Activated CD4-positive, alpha-beta T cell treated with anti-CD3 and anti-CD28 coated beads, Interleukin-2, amount 10 ng/mL, durations not matched to agents 24 days and 14 days (primary cell): ENCODE measurements at regions of chr17 and their contacts with region 1.

Region 1: DNA sequence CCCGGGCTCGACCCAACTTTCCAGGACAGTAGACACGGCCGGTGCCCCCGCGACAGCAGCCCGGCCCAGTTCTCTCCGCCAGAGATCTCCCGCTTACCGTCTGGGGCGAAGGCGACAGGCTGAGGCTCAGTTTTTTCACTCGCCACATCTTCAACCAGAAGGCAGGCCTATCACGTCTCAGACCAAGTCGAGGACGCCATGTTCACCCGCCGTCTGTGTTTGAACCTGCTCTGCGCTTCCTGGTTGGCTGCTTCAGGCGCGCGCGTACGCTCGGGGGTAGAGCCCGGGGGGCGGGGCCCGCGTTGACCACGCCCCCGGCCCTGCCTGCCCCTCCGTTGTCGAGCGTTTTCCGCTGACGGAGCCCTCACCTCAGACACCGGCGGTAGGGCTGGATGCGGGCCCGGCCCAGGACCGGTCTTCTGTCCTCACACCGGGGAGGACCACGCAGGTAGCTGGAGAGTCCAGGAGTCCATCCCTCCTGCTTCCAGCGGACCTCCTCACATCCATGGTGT is at the start of gene SPAG5:
- DNase-seq: peak; percentile 99
- H3K4me3 Mint-ChIP-seq: peak within 1 kb of the TSS; percentile 91
- H3K27ac Mint-ChIP-seq: peak within 1 kb of the TSS; percentile 98
- H3K4me1 Mint-ChIP-seq: peaks cover 22% of the 10 kb centered on the region
- H3K27me3 Mint-ChIP-seq: no peaks in the 10 kb centered on the region
- total RNA-seq, gene SPAG5: 89.6 and 91.3 TPM in 2 replicates

Region 2: GRCh38 chr17:28405632-28406472 is 193.0 kb before region 1 on chr17 and contains the start of gene SLC46A1:
- intact Hi-C with region 1: no loop called
- DNase-seq: peak; percentile 81
- H3K4me3 Mint-ChIP-seq: peak within 1 kb of the TSS; percentile 80
- H3K27ac Mint-ChIP-seq: peak within 1 kb of the TSS; percentile 39
- H3K4me1 Mint-ChIP-seq: peaks cover 7% of the 10 kb centered on the region
- H3K27me3 Mint-ChIP-seq: peaks cover 7% of the 10 kb centered on the region
- total RNA-seq, gene SLC46A1: 7.0 and 7.9 TPM in 2 replicates

Region 3: GRCh38 chr17:28552246-28552999 is 46.4 kb before region 1 on chr17 and contains the start of gene UNC119:
- intact Hi-C with region 1: loop called (anchors 2 kb)
- DNase-seq: peak; percentile 94
- H3K4me3 Mint-ChIP-seq: peak within 1 kb of the TSS; percentile 96
- H3K27ac Mint-ChIP-seq: peak within 1 kb of the TSS; percentile 90
- H3K4me1 Mint-ChIP-seq: peaks cover 53% of the 10 kb centered on the region
- H3K27me3 Mint-ChIP-seq: no peaks in the 10 kb centered on the region
- total RNA-seq, gene UNC119: 59.8 and 60.2 TPM in 2 replicates

Region 4: GRCh38 chr17:28571255-28572122 is 27.4 kb before region 1 on chr17 and contains the start of gene PIGS:
- intact Hi-C with region 1: loop called (anchors 1 kb)
- DNase-seq: peak; percentile 98
- H3K4me3 Mint-ChIP-seq: peak within 1 kb of the TSS; percentile 92
- H3K27ac Mint-ChIP-seq: peak within 1 kb of the TSS; percentile 94
- H3K4me1 Mint-ChIP-seq: peaks cover 53% of the 10 kb centered on the region
- H3K27me3 Mint-ChIP-seq: no peaks in the 10 kb centered on the region
- total RNA-seq, gene PIGS: 65.8 and 70.9 TPM in 2 replicates

Region 5: GRCh38 chr17:28579526-28579925 is 19.3 kb before region 1 on chr17:
- intact Hi-C with region 1: loop called (anchors 1 kb)
- DNase-seq: peak; percentile 77
- H3K4me3 Mint-ChIP-seq: peak overlapping the region; percentile 58
- H3K27ac Mint-ChIP-seq: peak overlapping the region; percentile 83
- H3K4me1 Mint-ChIP-seq: peaks cover 39% of the 10 kb centered on the region
- H3K27me3 Mint-ChIP-seq: no peaks in the 10 kb centered on the region

Region 6: DNA sequence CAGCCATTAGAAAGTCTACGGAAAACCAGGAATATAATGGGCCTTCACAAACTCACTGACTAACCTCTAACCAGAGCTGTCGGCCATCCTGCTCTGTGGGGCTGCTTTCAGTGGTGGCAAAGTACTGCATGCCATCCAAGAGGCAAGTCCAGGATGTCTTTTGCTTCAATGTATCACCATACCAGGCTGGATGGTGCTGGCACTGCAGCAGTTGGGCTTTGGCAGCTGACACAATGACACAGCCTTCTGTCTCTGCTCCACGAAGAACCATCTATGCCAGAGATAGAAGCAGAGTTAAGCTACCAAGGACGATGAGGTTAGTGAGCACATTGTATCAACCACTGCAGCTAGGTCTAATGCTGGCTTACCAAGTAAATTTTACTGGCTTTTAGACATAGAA is 24.8 kb after region 1 on chr17:
- intact Hi-C with region 1: no loop called
- DNase-seq: no peak
- H3K4me3 Mint-ChIP-seq: no peak overlapping the region
- H3K27ac Mint-ChIP-seq: no peak overlapping the region
- H3K4me1 Mint-ChIP-seq: peaks cover 8% of the 10 kb centered on the region
- H3K27me3 Mint-ChIP-seq: no peaks in the 10 kb centered on the region

Region 7: GRCh38 chr17:28661635-28662537 is 63.0 kb after region 1 on chr17 and contains the starts of genes SDF2 and SUPT6H:
- intact Hi-C with region 1: loop called (anchors 2 kb)
- DNase-seq: peak; percentile 98
- H3K4me3 Mint-ChIP-seq: peak within 1 kb of the TSS; percentile 99
- H3K27ac Mint-ChIP-seq: peak within 1 kb of the TSS; percentile 97
- H3K4me1 Mint-ChIP-seq: peaks cover 43% of the 10 kb centered on the region
- H3K27me3 Mint-ChIP-seq: no peaks in the 10 kb centered on the region
- total RNA-seq, gene SDF2: 43.8 and 46.2 TPM in 2 replicates
- total RNA-seq, gene SUPT6H: 100 and 108 TPM in 2 replicates